ENCODE measurements at regions of chr14 and their contacts with region 1.

Region 1: DNA sequence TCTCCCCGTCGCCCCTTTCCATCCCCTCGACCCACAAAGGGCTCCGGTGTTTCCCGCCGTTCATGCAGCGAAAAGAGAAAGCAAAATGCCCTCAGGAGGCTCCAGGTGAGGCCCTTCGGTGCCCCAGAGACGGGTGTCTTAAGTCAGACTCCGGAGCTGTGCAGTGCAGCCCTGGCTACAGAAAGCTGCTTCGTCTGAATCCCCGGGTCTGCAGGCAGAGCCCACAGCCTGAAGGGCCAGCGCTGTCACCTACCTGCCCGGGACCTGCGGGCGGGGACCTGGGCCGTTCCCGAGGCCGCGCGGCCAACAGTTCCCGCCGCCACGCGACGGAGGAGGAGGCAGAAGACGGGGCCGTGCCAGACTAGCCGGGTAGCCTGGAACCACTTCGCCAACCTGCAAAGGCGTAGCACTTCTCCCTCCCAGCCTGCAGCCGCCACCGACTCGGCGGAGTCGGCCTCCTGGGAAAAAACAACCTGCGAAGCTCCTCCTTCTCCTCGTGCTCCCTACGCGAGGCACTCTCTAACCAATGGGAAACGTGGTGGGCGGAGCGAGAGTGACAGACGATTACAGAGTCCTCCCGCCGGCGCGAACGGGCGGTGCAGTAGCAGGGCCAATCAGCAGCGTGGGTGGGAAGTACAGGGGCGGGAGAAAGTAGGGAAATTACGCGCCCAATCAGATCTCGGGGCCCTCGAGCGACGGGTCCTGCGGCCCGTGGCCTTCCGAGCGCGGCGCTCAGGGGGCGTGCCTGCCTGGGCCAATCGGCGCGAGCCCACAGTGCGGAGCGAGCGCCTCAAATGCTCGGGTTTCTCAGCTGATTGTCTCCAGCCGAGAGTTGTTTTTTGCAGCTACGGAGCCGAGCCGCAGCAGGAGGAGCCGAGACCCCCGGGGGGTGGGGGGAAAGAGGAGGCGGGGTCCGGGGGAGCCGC is at the starts of genes GPR137C and TXNDC16:
- H3K4me3 Mint-ChIP-seq: peak within 1 kb of the TSS; percentile 93
- H3K27ac Mint-ChIP-seq: peak within 1 kb of the TSS; percentile 86
- H3K4me1 Mint-ChIP-seq: peaks cover 37% of the 10 kb centered on the region
- H3K27me3 Mint-ChIP-seq: peaks cover 9% of the 10 kb centered on the region

Region 2: GRCh38 chr14:51989293-51990234 is 562.8 kb before region 1 on chr14 and contains the start of gene RTRAF:
- intact Hi-C with region 1: loop called (anchors 10 kb)
- H3K4me3 Mint-ChIP-seq: peak within 1 kb of the TSS; percentile 79
- H3K27ac Mint-ChIP-seq: peak within 1 kb of the TSS; percentile 83
- H3K4me1 Mint-ChIP-seq: peaks cover 20% of the 10 kb centered on the region
- H3K27me3 Mint-ChIP-seq: no peaks in the 10 kb centered on the region

Region 3: GRCh38 chr14:52313903-52314594 is 238.3 kb before region 1 on chr14 and contains the start of gene PTGER2:
- intact Hi-C with region 1: loop called (anchors 5 kb)
- H3K4me3 Mint-ChIP-seq: peak within 1 kb of the TSS; percentile 99
- H3K27ac Mint-ChIP-seq: peak within 1 kb of the TSS; percentile 98
- H3K4me1 Mint-ChIP-seq: peaks cover 75% of the 10 kb centered on the region
- H3K27me3 Mint-ChIP-seq: peaks cover 11% of the 10 kb centered on the region

Region 4: GRCh38 chr14:52650774-52651173 is 98.4 kb after region 1 on chr14:
- intact Hi-C with region 1: no loop called
- H3K4me3 Mint-ChIP-seq: no peak overlapping the region
- H3K27ac Mint-ChIP-seq: no peak overlapping the region
- H3K4me1 Mint-ChIP-seq: no peaks in the 10 kb centered on the region
- H3K27me3 Mint-ChIP-seq: no peaks in the 10 kb centered on the region

Region 5: GRCh38 chr14:52695481-52696091 is 143.3 kb after region 1 on chr14 and contains the start of gene ERO1A:
- intact Hi-C with region 1: loop called (anchors 2 kb)
- H3K4me3 Mint-ChIP-seq: peak within 1 kb of the TSS; percentile 87
- H3K27ac Mint-ChIP-seq: peak within 1 kb of the TSS; percentile 92
- H3K4me1 Mint-ChIP-seq: peaks cover 58% of the 10 kb centered on the region
- H3K27me3 Mint-ChIP-seq: no peaks in the 10 kb centered on the region

Region 6: GRCh38 chr14:52729925-52730667 is 177.8 kb after region 1 on chr14 and contains the start of gene STYX:
- intact Hi-C with region 1: loop called (anchors 10 kb)
- H3K4me3 Mint-ChIP-seq: peak within 1 kb of the TSS; percentile 94
- H3K27ac Mint-ChIP-seq: peak within 1 kb of the TSS; percentile 97
- H3K4me1 Mint-ChIP-seq: peaks cover 20% of the 10 kb centered on the region
- H3K27me3 Mint-ChIP-seq: no peaks in the 10 kb centered on the region

Region 7: GRCh38 chr14:52791203-52792096 is 239.1 kb after region 1 on chr14 and contains the start of gene GNPNAT1:
- intact Hi-C with region 1: loop called (anchors 5 kb)
- H3K4me3 Mint-ChIP-seq: peak within 1 kb of the TSS; percentile 84
- H3K27ac Mint-ChIP-seq: peak within 1 kb of the TSS; percentile 90
- H3K4me1 Mint-ChIP-seq: peaks cover 28% of the 10 kb centered on the region
- H3K27me3 Mint-ChIP-seq: no peaks in the 10 kb centered on the region

Measured in dendritic cell treated with granulocyte-macrophage colony-stimulating factor and Interleukin-4, amounts not matched to agents 40 ng/mL and 50 ng/mL, for 4 days (primary cell).